Activated CD8-positive, alpha-beta T cell treated with anti-CD3 and anti-CD28 coated beads for 36 hours (primary cell): ENCODE measurements at regions of chr4 and their contacts with region 1.

Region 1: GRCh38 chr4:139651282-139652194 is 14.1 kb upstream of the MGST2 start:
- DNase-seq: peak; percentile 85
- ATAC-seq: peak; percentile 85
- H3K4me3 Mint-ChIP-seq: no peak overlapping the region
- H3K27ac Mint-ChIP-seq: no peak overlapping the region
- H3K4me1 Mint-ChIP-seq: peaks cover 5% of the 10 kb centered on the region
- H3K27me3 Mint-ChIP-seq: no peaks in the 10 kb centered on the region
- CTCF ChIP-seq: peak; percentile 89

Region 2: GRCh38 chr4:139603576-139604387 is 47.8 kb before region 1 on chr4:
- CTCF ChIA-PET with region 1: interaction called, 112 read pairs
- POLR2A ChIA-PET with region 1: interaction called, 3 read pairs
- intact Hi-C with region 1: loop called (anchors 2 kb)
- DNase-seq: peak; percentile 44
- ATAC-seq: peak; percentile 29
- H3K4me3 Mint-ChIP-seq: no peak overlapping the region
- H3K27ac Mint-ChIP-seq: no peak overlapping the region
- H3K4me1 Mint-ChIP-seq: peaks cover 10% of the 10 kb centered on the region
- H3K27me3 Mint-ChIP-seq: no peaks in the 10 kb centered on the region
- CTCF ChIP-seq: peak; percentile 75

Region 3: DNA sequence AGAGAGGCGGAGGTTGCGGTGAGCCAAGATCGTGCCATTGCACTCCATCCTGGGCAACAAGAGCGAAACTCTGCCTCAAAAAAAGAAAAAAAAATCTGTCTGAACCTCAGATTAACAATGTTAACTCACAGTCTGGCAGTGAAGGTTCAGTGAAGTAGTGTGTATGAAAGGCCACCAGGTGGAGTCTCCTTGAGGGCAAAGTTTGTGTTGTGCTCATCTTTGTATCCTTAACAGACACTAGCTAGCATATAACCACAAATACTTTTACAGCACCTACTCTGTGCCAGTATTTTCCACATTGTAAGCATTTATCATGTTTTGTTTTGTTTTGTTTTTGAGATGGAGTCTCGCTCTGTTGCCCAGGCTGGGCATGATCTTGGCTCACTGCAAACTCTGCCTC is 31.9 kb before region 1 on chr4:
- CTCF ChIA-PET with region 1: interaction called, 18 read pairs
- POLR2A ChIA-PET with region 1: no interaction called
- intact Hi-C with region 1: no loop called
- DNase-seq: no peak
- ATAC-seq: peak; percentile 69
- H3K4me3 Mint-ChIP-seq: no peak overlapping the region
- H3K27ac Mint-ChIP-seq: no peak overlapping the region
- H3K4me1 Mint-ChIP-seq: no peaks in the 10 kb centered on the region
- H3K27me3 Mint-ChIP-seq: no peaks in the 10 kb centered on the region
- CTCF ChIP-seq: peak; percentile 55

Region 4: GRCh38 chr4:139665690-139666529 is 14.4 kb after region 1 on chr4 and contains the start of gene MGST2:
- CTCF ChIA-PET with region 1: interaction called, 21 read pairs
- POLR2A ChIA-PET with region 1: no interaction called
- intact Hi-C with region 1: no loop called
- DNase-seq: peak; percentile 59
- ATAC-seq: peak; percentile 83
- H3K4me3 Mint-ChIP-seq: peak within 1 kb of the TSS; percentile 75
- H3K27ac Mint-ChIP-seq: peak within 1 kb of the TSS; percentile 84
- H3K4me1 Mint-ChIP-seq: peaks cover 18% of the 10 kb centered on the region
- H3K27me3 Mint-ChIP-seq: peaks cover 1% of the 10 kb centered on the region
- CTCF ChIP-seq: no peak
- total RNA-seq, gene MGST2: 11.7 to 12.4 TPM

Region 5: DNA sequence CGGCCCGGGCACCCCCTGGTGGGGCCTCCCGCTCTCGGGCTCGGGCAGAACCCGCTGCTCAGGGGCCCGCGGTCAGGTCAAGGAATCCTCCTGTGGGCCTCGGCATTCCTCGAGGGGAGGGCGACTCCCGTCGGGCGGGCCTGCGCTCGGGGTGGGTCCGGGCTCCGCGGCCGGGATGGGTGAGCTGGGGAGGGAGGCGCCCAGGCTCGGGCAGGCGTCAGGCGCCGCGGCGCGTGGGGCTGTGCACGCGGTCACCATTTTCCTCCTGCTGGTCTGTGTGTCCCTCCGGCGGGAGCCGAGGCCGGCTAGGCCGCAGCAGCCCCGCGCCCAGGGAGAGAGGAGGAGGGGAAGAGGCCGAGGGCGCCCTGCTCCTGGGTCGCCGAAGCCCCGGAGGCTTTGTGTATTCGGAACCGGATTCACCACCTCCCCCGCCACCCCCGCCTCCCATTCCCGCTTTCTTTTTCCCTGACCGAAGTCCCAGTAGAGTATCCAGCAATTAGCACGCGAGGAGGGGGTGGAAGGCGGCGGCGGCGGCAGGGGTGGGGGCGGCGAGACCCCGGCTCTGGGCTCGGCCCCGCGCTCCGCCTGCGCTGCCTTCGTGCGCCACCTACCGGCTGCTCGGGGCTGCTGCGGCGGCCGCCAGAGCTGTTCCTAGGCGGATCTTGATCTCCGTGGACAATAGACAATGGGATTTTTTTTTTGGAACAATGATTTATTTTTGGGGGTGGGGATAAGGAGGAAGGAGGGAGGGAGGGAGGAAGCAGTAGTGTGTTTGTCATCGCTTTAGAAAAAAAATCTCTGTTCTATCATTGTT is 601.4 kb after region 1 on chr4:
- CTCF ChIA-PET with region 1: interaction called, 7 read pairs
- POLR2A ChIA-PET with region 1: no interaction called
- intact Hi-C with region 1: loop called (anchors 10 kb)
- DNase-seq: peak; percentile 62
- ATAC-seq: peak; percentile 69
- H3K4me3 Mint-ChIP-seq: peak overlapping the region; percentile 29
- H3K27ac Mint-ChIP-seq: no peak overlapping the region
- H3K4me1 Mint-ChIP-seq: peaks cover 25% of the 10 kb centered on the region
- H3K27me3 Mint-ChIP-seq: peaks cover 11% of the 10 kb centered on the region
- CTCF ChIP-seq: peak; percentile 97